Left cardiac atrium (tissue), 4 donors: ENCODE measurements at regions of chr12 and their contacts with region 1.

Region 1: GRCh38 chr12:113048716-113049127 is 7.8 kb upstream of the DTX1 start:
- DNase-seq: peak; percentile 45
- ATAC-seq: peak; percentile 72 to 86

Region 2: DNA sequence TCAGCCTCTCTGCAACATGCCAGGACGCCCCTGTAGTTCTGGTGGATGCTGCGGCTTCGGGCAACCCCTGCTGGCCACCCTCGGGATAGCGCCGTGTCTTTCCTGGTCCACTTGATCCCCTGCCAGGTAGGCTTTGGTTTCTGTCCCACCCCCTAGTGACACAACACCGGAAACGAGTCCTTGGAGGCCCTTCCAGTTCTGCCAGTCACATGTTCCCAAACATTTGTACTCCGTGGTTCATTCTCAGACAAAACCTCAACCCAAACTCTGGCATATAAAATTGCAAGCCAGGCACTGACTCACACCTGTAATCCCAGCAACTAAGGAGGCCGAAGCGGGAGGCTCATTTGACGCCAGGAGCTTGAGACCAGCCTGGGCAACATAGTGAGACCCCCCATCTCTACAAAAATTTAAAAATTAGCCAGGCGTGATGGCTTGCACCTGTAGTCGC is 49.7 kb after region 1 on chr12:
- intact Hi-C with region 1: loop called in 1 of 2 experiments (anchors 5 kb)
- DNase-seq: peak; percentile 83
- ATAC-seq: peak; percentile 70 to 85

Region 3: DNA sequence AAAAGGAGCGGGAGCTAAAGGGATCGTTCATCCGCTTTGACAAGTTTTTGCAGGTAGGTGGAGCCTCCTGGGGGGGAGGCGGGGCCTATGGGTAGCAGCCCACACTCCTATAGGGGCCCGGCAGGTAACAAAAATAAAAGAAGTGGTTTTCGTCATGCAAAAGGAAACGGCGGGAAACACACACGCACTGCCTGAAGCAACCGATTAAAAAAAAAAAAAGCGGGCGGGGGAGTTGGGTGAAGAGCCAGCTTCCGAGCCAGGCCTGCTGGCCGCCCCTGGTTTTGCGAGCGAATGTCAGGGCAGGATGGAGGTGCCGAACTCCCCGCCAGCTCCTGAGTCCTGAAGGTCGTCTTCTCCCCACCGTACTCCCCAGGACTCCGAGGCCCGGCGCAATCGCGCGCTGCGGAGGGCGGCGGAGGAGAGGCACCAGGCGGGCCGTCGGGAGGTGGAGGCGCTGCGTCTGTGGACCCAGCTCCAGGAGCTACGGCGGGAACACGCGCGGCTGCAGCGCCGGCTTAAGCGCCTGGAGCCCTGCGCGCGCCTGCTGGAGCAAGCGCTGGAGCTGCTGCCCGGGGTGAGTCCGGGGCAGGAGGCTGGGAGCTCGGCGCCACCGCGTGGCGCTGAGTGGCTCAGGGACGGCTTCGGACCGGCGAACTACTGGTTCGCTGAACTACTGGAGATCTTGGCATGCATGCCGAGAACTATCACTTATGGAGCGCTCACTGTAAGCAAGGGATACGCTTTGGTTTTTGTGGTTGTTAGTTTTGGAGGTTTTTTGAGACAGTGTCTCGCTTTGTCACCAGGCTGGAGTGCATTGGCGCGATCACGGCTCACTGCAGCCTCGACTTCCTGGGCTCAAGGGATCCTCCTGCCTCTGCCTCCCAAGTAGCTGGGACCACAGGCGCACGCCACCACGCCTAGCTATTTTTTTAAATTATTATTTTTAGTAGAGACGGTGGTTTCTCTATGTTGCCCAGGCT is 104.4 kb after region 1 on chr12:
- intact Hi-C with region 1: loop called (anchors 5 kb)
- DNase-seq: peak; percentile 68
- ATAC-seq: peak; percentile 88 to 89

Region 4: DNA sequence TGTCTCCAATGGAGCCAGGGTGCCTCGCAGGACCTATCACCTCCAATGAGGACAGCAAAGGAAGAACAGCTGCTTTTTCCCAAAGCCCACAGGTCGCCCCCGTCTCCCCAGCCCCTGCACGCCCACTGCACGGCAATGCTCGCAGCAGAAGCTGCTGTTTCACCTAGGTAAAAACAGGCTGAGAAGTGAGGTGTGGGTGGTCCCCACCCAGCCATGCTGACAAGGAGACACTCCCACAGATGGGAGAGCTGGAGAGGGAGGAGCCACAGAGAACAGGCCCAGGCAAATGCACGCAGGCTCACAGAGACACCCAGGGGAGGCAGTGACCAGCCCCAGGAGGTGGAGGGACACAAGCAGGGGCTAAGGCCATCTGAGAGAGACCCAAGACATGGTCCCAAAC is 111.2 kb after region 1 on chr12:
- intact Hi-C with region 1: loop called in 1 of 2 experiments (anchors 5 kb)
- DNase-seq: no peak
- ATAC-seq: no peak

Region 5: GRCh38 chr12:113174461-113175384 is 126.0 kb after region 1 on chr12:
- intact Hi-C with region 1: loop called (anchors 2 to 5 kb)
- DNase-seq: peak; percentile 70
- ATAC-seq: peak; percentile 78 to 83